ENCODE measurements at regions of chr10 and their contacts with region 1.

Region 1: DNA sequence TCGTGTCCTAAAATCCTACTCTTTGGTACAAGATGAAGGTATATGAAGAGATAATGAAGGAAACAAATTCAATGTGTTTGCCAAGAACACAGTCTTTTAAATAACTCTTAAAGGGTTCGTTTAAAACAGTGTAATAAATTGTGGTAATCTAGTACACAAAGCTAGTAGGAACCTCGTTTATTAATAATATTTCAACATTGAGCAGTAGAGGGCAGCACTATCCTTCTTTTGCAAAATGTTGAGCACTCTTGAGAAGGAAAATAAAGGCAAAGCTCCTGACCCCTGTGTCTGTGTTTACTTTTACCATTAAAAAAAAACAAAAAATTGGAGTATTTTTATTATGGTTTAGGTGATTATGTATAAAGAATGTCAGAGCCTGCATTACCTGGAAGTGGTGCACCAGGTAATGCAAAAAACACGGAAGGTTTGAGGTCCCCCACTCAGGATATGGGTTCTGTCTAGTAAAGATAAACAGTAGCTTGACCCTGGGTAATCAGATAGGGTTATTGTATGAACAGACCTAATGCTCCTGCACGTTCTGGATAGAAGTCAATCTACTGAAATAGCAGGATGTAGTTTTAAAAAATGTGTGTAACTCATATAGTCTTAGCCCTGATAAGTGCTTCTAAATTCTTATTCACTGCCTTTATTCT is 5.7 kb upstream of the GOT1 start:
- DNase-seq: no peak
- H3K4me3 ChIP-seq: peak overlapping the region in 2 of 4 donors; percentile 12 to 15
- H3K27ac ChIP-seq: peak overlapping the region in 3 of 4 donors; percentile 62 to 97 (median 69)
- H3K4me1 ChIP-seq: peaks cover 0 to 61% (median 47%) of the 10 kb centered on the region in 4 donors
- H3K27me3 ChIP-seq: no peaks in the 10 kb centered on the region
- CTCF ChIP-seq: peak; percentile 41 to 51 (median 46)
- EP300 ChIP-seq: no peak
- POLR2A ChIP-seq: no peak

Region 2: DNA sequence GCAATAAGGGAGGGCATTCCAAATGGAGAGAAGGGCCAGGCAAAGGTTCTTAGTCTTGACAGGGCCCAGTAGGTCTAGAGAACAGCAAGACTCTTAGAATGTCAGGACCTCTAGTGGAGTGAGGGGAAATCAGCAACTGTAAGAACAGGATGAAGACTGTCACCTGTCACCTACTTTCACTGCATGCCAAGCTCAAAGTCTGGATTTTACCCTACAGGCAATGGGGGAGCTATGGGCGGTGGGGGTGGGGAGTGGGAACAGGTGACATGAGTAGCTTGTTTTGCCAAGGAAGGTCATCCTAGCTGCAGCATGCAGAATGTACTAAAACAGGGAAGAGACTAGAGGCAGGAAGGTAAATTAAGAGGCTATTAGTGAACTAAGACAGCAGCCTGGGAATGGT is 24.0 kb before region 1 on chr10:
- intact Hi-C with region 1: no loop called
- DNase-seq: no peak
- H3K4me3 ChIP-seq: no peak overlapping the region
- H3K27ac ChIP-seq: no peak overlapping the region
- H3K4me1 ChIP-seq: no peaks in the 10 kb centered on the region
- H3K27me3 ChIP-seq: no peaks in the 10 kb centered on the region
- CTCF ChIP-seq: no peak
- EP300 ChIP-seq: no peak
- POLR2A ChIP-seq: no peak

Region 3: GRCh38 chr10:99548041-99548530 is 112.0 kb after region 1 on chr10:
- intact Hi-C with region 1: loop called (anchors 1 kb)
- DNase-seq: no peak
- H3K4me3 ChIP-seq: no peak overlapping the region
- H3K27ac ChIP-seq: no peak overlapping the region
- H3K4me1 ChIP-seq: peaks cover 0 to 9% (median 4%) of the 10 kb centered on the region in 4 donors
- H3K27me3 ChIP-seq: no peaks in the 10 kb centered on the region
- CTCF ChIP-seq: peak; percentile 29 to 41 (median 37)
- EP300 ChIP-seq: no peak
- POLR2A ChIP-seq: no peak

Region 4: GRCh38 chr10:99605349-99605748 is 169.2 kb after region 1 on chr10:
- intact Hi-C with region 1: no loop called
- DNase-seq: no peak
- H3K4me3 ChIP-seq: no peak overlapping the region
- H3K27ac ChIP-seq: no peak overlapping the region
- H3K4me1 ChIP-seq: no peaks in the 10 kb centered on the region
- H3K27me3 ChIP-seq: no peaks in the 10 kb centered on the region
- CTCF ChIP-seq: no peak
- EP300 ChIP-seq: no peak
- POLR2A ChIP-seq: no peak